ENCODE measurements at regions of chr1 and their contacts with region 1.

Region 1: DNA sequence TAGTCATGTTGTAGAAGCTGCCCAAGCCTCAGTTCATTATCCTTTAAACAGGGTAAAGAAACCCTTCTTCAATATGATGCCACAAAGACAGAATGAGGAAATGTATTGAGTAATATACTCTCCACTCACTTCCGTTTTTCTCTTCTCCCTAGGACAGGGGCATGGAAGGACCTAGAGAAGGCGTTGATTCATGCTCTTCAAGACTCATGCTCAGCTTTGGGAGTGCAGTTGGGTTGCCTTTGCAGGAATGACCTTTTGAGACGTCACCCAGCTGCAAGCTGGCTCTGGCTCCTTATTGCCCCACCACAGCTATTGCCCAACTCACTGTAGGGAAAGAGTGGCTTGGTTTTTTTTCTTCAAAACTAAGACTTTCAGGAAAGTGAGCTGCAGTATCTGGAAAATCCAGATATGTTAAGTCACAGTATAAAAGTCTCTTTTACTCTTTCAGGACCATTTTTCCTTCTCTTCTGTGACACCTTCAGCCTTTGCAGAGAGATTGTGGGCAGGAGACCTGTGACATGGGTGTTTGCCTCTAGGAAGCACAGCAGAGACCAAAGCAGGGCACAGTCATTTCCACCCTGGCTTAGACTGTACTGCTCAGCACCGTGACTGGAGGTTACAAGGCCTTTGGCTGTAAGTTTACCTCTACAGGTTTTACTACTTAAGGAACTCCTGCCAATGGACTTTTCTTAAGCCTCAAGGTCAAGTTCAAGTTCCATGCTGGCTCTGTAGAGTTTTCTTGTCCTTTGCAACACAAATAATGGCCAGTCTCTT is 39.5 kb downstream of the XCL2 start:
- DNase-seq: no peak
- H3K4me3 ChIP-seq: no peak overlapping the region
- H3K27ac ChIP-seq: no peak overlapping the region
- H3K4me1 ChIP-seq: no peaks in the 10 kb centered on the region
- H3K27me3 ChIP-seq: no peaks in the 10 kb centered on the region
- CTCF ChIP-seq: no peak

Region 2: GRCh38 chr1:168535536-168535935 is 31.3 kb after region 1 on chr1:
- intact Hi-C with region 1: no loop called
- DNase-seq: no peak
- H3K4me3 ChIP-seq: no peak overlapping the region
- H3K27ac ChIP-seq: no peak overlapping the region
- H3K4me1 ChIP-seq: no peaks in the 10 kb centered on the region
- H3K27me3 ChIP-seq: no peaks in the 10 kb centered on the region
- CTCF ChIP-seq: no peak

Region 3: DNA sequence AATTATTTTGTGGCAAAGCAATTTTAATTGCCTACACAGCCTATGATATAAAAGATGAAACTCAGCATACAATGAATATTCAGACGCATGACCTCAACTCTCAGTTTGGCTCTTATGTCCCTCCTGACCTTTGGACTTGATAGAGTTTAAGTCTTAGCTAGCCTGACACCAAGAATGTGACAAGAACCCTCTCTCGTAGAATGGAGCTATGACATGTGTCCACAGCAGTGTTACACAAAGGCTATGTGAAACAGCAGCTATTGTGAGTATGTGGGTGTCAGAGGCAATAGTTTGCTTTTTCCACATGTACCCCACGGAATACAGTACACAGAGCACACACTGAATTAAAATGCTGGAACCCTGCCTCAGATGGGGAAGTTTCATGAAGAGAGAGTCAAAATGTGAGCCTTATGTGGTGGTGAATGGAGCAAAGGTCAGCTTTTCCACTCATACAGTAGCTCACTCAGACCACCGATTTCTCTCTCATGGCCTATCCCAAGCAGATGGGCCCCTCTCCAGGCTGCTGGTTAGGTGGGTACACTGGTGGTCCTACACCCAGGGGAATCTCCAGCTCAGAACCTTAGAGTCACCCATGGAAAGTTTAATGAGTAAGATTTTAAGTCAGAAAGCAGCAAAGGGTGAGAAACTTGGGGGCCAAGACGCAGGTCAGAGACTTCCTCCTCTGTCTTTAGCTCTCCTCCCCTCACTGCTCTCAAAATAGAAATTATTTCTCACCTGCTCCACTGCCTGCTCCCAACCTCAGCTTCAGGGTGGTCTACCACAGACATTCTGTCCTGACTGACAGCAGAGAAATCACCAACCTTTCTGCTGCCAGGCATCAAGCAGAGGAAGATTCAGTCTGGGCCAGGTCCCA is 49.7 kb after region 1 on chr1:
- intact Hi-C with region 1: loop called (anchors 2 kb)
- DNase-seq: no peak
- H3K4me3 ChIP-seq: no peak overlapping the region
- H3K27ac ChIP-seq: no peak overlapping the region
- H3K4me1 ChIP-seq: no peaks in the 10 kb centered on the region
- H3K27me3 ChIP-seq: no peaks in the 10 kb centered on the region
- CTCF ChIP-seq: no peak